Endothelial cell of umbilical vein (primary cell): ENCODE measurements at regions of chr1 and their contacts with region 1.

Region 1: DNA sequence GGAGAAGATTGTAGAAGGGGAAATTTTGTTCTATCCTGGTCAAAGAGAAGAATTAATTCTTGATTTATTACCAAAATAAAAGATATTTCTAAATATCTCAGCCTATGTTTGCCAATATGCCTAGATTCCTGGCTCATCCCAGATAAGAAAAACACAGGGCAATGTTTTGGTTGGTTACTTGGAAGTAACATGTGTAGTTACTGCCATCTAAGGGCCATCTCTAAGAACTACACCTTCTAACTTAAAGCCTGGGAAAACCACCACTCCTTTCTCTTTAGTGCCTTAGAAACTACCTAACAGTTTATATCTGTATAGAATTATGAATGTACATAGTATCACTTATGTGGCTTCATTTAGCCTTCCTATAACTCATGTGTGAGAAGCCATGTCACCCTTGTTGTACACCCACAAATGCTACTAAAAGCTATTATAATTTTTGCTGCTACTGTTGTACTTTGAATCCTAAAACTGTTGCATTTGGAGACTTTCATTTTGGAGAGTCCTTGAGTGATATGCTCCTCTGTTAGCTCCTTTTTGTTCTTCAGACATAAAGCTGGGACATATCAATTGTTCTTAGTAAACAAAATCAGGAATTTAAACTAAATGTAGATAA is 4.5 kb downstream of the AIM2 start:
- DNase-seq: peak; percentile 66
- H3K4me3 ChIP-seq: no peak overlapping the region
- H3K27ac ChIP-seq: no peak overlapping the region
- H3K4me1 ChIP-seq: peaks cover 8% of the 10 kb centered on the region
- H3K27me3 ChIP-seq: peaks cover 11 to 14% of the 10 kb centered on the region in 2 experiments
- CTCF ChIP-seq: peak; percentile 50 to 57
- POLR2A ChIP-seq: no peak

Region 2: DNA sequence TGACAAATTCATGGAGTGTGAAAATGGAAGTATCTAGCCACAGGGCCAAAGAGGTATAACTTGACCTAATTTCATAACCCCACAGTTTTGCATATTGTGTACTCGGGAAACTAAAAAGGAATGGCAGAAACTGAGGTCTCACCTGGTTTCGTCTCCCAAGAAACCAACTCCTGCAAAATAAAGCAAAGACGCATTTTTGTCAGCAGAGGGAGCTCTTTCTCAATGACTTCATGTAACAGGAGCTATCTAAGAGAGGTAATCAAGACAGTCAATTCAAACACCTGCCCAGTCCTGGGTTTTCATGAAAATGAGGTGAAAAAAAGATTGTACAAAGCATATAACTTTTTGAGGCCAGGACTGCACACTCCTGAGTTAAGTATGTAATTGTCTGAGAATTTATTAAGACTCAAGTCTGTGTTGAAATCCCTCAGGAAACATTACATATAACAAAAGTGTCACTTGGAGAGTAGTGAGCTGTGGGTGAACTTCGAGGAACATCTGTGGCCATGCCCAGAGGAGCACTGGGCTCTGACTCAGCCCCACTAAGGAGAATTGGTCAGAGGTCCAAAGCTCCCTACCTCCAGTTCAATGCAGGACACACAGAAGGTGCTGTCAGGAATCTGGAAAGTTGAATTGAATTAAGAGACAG is 1491.8 kb before region 1 on chr1:
- CTCF ChIA-PET with region 1: no interaction called
- POLR2A ChIA-PET with region 1: no interaction called
- dilution Hi-C with region 1: no loop called
- intact Hi-C with region 1: loop called (anchors 5 kb)
- DNase-seq: peak; percentile 70
- H3K4me3 ChIP-seq: no peak overlapping the region
- H3K27ac ChIP-seq: no peak overlapping the region
- H3K4me1 ChIP-seq: no peaks in the 10 kb centered on the region
- H3K27me3 ChIP-seq: peaks cover 0 to 2% of the 10 kb centered on the region in 2 experiments
- CTCF ChIP-seq: peak; percentile 59 to 63
- POLR2A ChIP-seq: no peak

Region 3: DNA sequence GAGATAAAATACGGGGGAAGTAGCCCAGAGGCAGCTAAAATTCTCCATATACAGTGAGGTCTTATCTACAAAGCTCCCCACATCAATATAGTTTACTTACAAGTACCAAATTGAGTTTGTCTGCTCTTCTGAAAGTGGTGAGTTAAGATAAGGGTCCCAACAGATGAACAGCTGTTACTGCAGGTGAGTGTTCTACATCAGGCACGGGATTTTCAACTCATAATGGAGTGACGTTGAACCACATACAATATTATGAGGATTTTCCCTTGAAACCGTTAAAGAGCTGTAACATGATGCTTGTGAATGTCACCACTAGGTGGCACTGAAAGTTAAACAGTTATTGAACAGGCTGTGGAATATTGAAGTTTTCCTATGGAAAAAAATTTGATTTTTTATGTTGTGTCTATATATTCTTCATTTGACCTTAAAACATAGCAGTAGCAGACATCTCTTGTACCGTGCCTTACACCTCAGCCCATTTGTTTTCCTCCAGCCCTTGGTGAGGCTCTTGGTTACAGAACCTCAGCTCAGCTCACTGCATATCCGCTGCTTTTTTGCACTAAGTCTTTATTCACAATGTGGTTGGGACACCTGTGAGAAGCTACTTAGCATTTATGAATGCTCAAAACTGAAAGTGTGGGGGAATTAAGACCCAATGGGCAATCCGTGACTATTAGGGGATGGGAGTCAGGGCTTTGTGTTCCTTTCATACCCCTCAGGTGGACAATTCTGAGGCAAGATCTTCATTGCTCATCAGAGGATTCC is 868.2 kb before region 1 on chr1:
- CTCF ChIA-PET with region 1: interaction called, 131 read pairs
- POLR2A ChIA-PET with region 1: no interaction called
- dilution Hi-C with region 1: no loop called
- intact Hi-C with region 1: loop called (anchors 1 kb)
- DNase-seq: peak; percentile 70
- H3K4me3 ChIP-seq: no peak overlapping the region
- H3K27ac ChIP-seq: no peak overlapping the region
- H3K4me1 ChIP-seq: peaks cover 5% of the 10 kb centered on the region
- H3K27me3 ChIP-seq: peaks cover 0 to 16% of the 10 kb centered on the region in 2 experiments
- CTCF ChIP-seq: peak; percentile 59 to 63
- POLR2A ChIP-seq: no peak

Region 4: GRCh38 chr1:158527190-158527815 is 544.8 kb before region 1 on chr1:
- CTCF ChIA-PET with region 1: interaction called, 11 read pairs
- POLR2A ChIA-PET with region 1: no interaction called
- dilution Hi-C with region 1: no loop called
- intact Hi-C with region 1: no loop called
- DNase-seq: peak; percentile 24
- H3K4me3 ChIP-seq: no peak overlapping the region
- H3K27ac ChIP-seq: no peak overlapping the region
- H3K4me1 ChIP-seq: no peaks in the 10 kb centered on the region
- H3K27me3 ChIP-seq: no peaks in the 10 kb centered on the region
- CTCF ChIP-seq: peak in 1 of 2 donors; percentile 37
- POLR2A ChIP-seq: no peak

Region 5: DNA sequence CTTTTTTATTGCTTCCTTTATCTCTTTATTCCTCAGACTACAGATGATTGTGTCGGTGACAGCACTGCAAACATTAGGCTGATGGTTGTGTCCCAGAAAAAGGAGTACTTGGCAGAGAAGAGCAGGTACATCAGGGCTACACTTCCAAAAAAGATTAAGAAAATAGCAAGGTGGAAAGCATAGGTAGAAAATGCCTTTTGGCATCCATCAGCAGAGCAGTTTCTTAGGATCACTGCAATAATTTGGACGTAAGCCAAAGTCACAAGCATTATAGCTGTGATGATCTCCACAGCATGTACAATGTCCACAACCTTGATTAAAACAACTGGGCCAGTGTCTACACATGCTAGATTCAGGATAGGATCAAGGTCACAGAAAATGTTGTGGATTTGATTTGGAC is 377.5 kb before region 1 on chr1:
- CTCF ChIA-PET with region 1: no interaction called
- POLR2A ChIA-PET with region 1: no interaction called
- dilution Hi-C with region 1: no loop called
- intact Hi-C with region 1: no loop called
- DNase-seq: no peak
- H3K4me3 ChIP-seq: no peak overlapping the region
- H3K27ac ChIP-seq: no peak overlapping the region
- H3K4me1 ChIP-seq: no peaks in the 10 kb centered on the region
- H3K27me3 ChIP-seq: no peaks in the 10 kb centered on the region
- CTCF ChIP-seq: no peak
- POLR2A ChIP-seq: no peak

Region 6: GRCh38 chr1:158998781-158999161 is 73.3 kb before region 1 on chr1:
- CTCF ChIA-PET with region 1: interaction called, 5 read pairs
- POLR2A ChIA-PET with region 1: no interaction called
- dilution Hi-C with region 1: no loop called
- intact Hi-C with region 1: loop called (anchors 1 kb)
- DNase-seq: peak; percentile 87
- H3K4me3 ChIP-seq: peak overlapping the region; percentile 36 to 78 (median 57)
- H3K27ac ChIP-seq: peak overlapping the region; percentile 85
- H3K4me1 ChIP-seq: peaks cover 26% of the 10 kb centered on the region
- H3K27me3 ChIP-seq: peaks cover 2% of the 10 kb centered on the region in 2 experiments
- CTCF ChIP-seq: peak; percentile 62 to 69
- POLR2A ChIP-seq: no peak